ENCODE measurements at regions of chr22 and their contacts with region 1.

Region 1: GRCh38 chr22:36277482-36278291 is 24.8 kb downstream of the APOL1 start:
- DNase-seq: peak; percentile 81
- H3K4me3 ChIP-seq: no peak overlapping the region
- H3K27ac ChIP-seq: peak overlapping the region; percentile 48 to 64 (median 54)
- H3K4me1 ChIP-seq: peaks cover 0 to 29% (median 6%) of the 10 kb centered on the region in 4 donors
- H3K27me3 ChIP-seq: no peaks in the 10 kb centered on the region
- CTCF ChIP-seq: peak; percentile 70 to 77 (median 75)
- EP300 ChIP-seq: no peak
- POLR2A ChIP-seq: no peak

Region 2: GRCh38 chr22:36144886-36145541 is 132.7 kb before region 1 on chr22:
- intact Hi-C with region 1: loop called (anchors 5 kb)
- DNase-seq: peak; percentile 89
- H3K4me3 ChIP-seq: no peak overlapping the region
- H3K27ac ChIP-seq: peak overlapping the region; percentile 16 to 50 (median 20)
- H3K4me1 ChIP-seq: peaks cover 0 to 25% (median 12%) of the 10 kb centered on the region in 4 donors
- H3K27me3 ChIP-seq: no peaks in the 10 kb centered on the region
- CTCF ChIP-seq: peak; percentile 80 to 89 (median 82)
- EP300 ChIP-seq: no peak
- POLR2A ChIP-seq: no peak

Region 3: GRCh38 chr22:36194971-36195370 is 82.7 kb before region 1 on chr22:
- intact Hi-C with region 1: loop called (anchors 2 kb)
- DNase-seq: peak; percentile 88
- H3K4me3 ChIP-seq: no peak overlapping the region
- H3K27ac ChIP-seq: peak overlapping the region in 1 of 4 donors; percentile 18
- H3K4me1 ChIP-seq: peaks cover 0 to 28% (median 3%) of the 10 kb centered on the region in 4 donors
- H3K27me3 ChIP-seq: no peaks in the 10 kb centered on the region
- CTCF ChIP-seq: peak; percentile 68 to 80 (median 75)
- EP300 ChIP-seq: no peak
- POLR2A ChIP-seq: no peak

Region 4: DNA sequence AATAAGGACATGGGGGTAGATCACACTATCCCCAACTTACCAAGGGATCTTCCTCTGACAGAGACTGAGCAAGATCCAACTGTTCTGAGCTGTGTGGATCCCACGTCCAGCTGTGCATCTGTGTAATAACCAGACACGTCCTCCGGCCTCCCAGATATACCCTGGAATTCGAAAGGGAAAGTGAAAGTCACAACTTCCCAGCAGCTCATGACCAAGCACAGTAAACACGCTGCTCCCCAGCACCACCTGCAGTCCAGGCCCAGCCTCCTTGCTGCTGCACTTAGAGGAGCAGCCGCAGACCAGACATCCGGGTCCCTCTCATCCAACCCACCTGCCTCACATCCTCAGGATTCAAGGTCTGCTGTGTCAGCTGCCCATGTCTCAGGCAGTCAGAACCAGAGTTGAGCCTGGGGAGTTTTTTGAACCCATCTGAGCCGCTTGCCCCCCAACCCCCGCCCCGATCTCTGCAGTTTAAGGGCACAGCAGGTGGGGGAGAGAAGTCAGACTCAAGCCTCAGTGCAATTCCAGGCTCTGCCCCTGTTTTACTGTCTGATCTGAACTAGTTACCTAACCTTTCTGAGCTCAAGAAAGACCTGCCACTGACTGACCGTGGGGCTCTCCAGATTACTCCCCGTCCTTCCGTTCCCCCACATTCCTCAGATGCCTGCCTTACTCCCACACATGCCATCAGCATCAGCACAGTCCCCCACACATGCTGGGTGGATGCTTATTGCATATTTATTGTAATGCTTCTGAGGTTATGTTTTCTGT is 38.1 kb before region 1 on chr22 and contains the start of gene APOL2:
- intact Hi-C with region 1: loop called (anchors 2 kb)
- DNase-seq: peak; percentile 97
- H3K4me3 ChIP-seq: peak within 1 kb of the TSS; percentile 36 to 60 (median 55)
- H3K27ac ChIP-seq: peak within 1 kb of the TSS; percentile 90 to 93 (median 90)
- H3K4me1 ChIP-seq: peaks cover 0 to 61% (median 49%) of the 10 kb centered on the region in 4 donors
- H3K27me3 ChIP-seq: no peaks in the 10 kb centered on the region
- CTCF ChIP-seq: peak; percentile 47 to 69 (median 56)
- EP300 ChIP-seq: peak in 1 of 4 donors; percentile 18
- POLR2A ChIP-seq: peak; percentile 59 to 82
- total RNA-seq, gene APOL2: 26.8 to 59.5 (median 29.4) TPM

Measured in sigmoid colon (tissue), 7 donors.